Calu3 (cell line): ENCODE measurements at regions of chr3 and their contacts with region 1.

Region 1: GRCh38 chr3:129855454-129856419 is 37.8 kb downstream of the TMCC1 start:
- DNase-seq: no peak
- H3K4me3 Mint-ChIP-seq: no peak overlapping the region
- H3K27ac Mint-ChIP-seq: peak overlapping the region; percentile 86
- H3K4me1 Mint-ChIP-seq: peaks cover 30% of the 10 kb centered on the region
- H3K27me3 Mint-ChIP-seq: no peaks in the 10 kb centered on the region
- CTCF ChIP-seq: no peak

Region 2: GRCh38 chr3:128942161-128942876 is 913.4 kb before region 1 on chr3:
- CTCF ChIA-PET with region 1: no interaction called
- intact Hi-C with region 1: no loop called
- DNase-seq: peak; percentile 84
- H3K4me3 Mint-ChIP-seq: no peak overlapping the region
- H3K27ac Mint-ChIP-seq: no peak overlapping the region
- H3K4me1 Mint-ChIP-seq: peaks cover 13% of the 10 kb centered on the region
- H3K27me3 Mint-ChIP-seq: no peaks in the 10 kb centered on the region
- CTCF ChIP-seq: no peak

Region 3: DNA sequence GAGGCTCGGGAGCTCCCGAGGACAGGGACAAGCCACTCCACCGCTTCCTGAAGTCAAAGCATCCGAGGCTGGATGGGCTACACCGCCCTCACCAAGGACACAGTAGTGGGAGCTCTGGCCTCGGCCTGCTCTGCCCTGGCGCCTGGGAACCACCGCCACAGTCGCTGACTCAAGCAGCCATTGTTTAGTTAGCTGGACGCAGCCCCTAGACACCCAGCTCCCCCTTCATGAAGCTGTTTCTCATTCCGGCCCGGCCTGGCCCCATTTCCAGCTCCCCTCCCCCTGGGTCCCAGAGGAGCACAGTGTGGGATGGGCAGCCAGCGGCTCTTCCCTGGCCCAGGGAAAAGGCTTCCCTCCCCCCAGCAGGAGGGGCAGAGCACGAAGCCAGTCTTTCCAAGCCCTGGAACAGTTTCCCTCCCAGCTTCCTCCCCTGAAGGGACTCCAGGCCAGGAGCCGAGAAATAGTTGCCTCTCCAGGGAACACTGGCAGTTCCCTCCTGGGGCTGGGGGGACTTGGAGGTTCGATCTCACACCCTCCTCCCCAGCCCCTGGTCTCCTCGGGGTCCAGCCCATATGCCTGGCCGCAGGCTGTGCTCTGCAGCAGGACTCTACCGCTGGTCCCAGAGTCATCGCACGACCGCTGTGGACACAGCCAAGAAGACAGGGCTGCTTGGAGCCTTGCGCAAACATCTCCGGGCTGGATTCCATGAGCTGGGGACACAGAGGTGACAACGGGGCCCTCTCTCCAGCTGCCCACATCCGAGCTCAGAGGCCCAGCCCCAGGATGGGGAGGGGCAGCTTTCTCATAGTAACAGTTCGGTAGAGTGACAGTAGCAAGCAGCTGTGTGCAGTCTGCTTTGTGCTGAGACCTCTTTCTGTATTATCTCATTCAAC is 259.3 kb before region 1 on chr3:
- CTCF ChIA-PET with region 1: no interaction called
- intact Hi-C with region 1: no loop called
- DNase-seq: no peak
- H3K4me3 Mint-ChIP-seq: no peak overlapping the region
- H3K27ac Mint-ChIP-seq: no peak overlapping the region
- H3K4me1 Mint-ChIP-seq: no peaks in the 10 kb centered on the region
- H3K27me3 Mint-ChIP-seq: peaks cover 12% of the 10 kb centered on the region
- CTCF ChIP-seq: no peak

Region 4: GRCh38 chr3:129893581-129894070 is 37.9 kb after region 1 on chr3 and contains the start of gene TMCC1:
- CTCF ChIA-PET with region 1: no interaction called
- intact Hi-C with region 1: loop called (anchors 5 kb)
- DNase-seq: peak; percentile 99
- H3K4me3 Mint-ChIP-seq: peak within 1 kb of the TSS; percentile 88
- H3K27ac Mint-ChIP-seq: peak within 1 kb of the TSS; percentile 71
- H3K4me1 Mint-ChIP-seq: peaks cover 40% of the 10 kb centered on the region
- H3K27me3 Mint-ChIP-seq: no peaks in the 10 kb centered on the region
- CTCF ChIP-seq: no peak
- total RNA-seq, gene TMCC1: 51.7 and 57.2 TPM in 2 replicates